ENCODE measurements at regions of chr22 and their contacts with region 1.

Region 1: GRCh38 chr22:42553475-42554361 is at the start of gene SERHL2:
- DNase-seq: peak; percentile 74 to 88 (median 79)
- H3K4me3 ChIP-seq: peak within 1 kb of the TSS; percentile 61 to 66
- H3K4me3 Mint-ChIP-seq: peak within 1 kb of the TSS; percentile 78 to 90 (median 82)
- H3K27ac ChIP-seq: no peak within 1 kb of the TSS
- H3K27ac Mint-ChIP-seq: peak within 1 kb of the TSS in 5 of 7 donors; percentile 41 to 85 (median 80)
- H3K4me1 ChIP-seq: peaks cover 16% of the 10 kb centered on the region
- H3K4me1 Mint-ChIP-seq: peaks cover 9 to 29% (median 11%) of the 10 kb centered on the region in 4 donors
- H3K27me3 ChIP-seq: no peaks in the 10 kb centered on the region
- H3K27me3 Mint-ChIP-seq: no peaks in the 10 kb centered on the region
- total RNA-seq, gene SERHL2: 0.36 to 0.81 TPM

Region 2: DNA sequence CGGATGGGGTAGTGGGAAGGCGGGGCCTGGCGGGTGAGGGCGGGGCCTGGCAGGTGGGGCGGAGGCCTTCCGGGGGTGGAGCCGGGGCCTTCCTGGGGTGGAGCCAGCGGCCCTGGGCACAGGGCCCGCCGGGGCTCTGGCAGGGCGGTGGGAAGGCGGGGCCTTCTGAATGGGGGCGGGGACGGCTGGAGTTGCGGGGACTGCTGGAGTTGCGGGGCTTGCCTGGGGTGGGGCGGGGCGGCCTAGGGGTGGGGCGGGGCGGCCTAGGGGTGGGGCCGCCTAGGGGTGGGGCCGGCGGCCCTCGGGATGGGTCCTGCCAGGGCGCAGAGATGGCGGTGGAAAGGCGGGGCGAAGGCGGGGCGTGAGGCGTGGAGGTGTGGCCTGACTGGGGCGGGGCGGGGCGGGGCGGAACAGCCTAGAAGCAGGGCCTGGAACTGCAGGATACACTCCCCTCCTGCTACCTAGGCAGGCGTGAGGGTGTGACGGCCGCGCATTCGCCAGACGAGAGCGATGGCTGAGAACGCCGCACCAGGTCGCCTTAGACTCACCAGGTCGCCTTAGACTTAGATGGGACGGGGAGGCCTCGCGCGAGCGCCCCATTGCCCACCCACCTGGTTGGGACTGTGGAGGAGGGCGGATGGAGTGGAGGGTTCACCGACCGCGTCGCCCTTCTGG is 53.4 kb before region 1 on chr22:
- CTCF ChIA-PET with region 1: no interaction called
- POLR2A ChIA-PET with region 1: no interaction called
- intact Hi-C with region 1: loop called (anchors 2 kb)
- DNase-seq: peak; percentile 80 to 86 (median 82)
- H3K4me3 ChIP-seq: peak overlapping the region in 1 of 2 donors; percentile 33
- H3K4me3 Mint-ChIP-seq: peak overlapping the region; percentile 61 to 82 (median 72)
- H3K27ac ChIP-seq: no peak overlapping the region
- H3K27ac Mint-ChIP-seq: peak overlapping the region in 4 of 7 donors; percentile 15 to 78 (median 51)
- H3K4me1 ChIP-seq: peaks cover 7% of the 10 kb centered on the region
- H3K4me1 Mint-ChIP-seq: peaks cover 6 to 18% (median 12%) of the 10 kb centered on the region in 4 donors
- H3K27me3 ChIP-seq: no peaks in the 10 kb centered on the region
- H3K27me3 Mint-ChIP-seq: no peaks in the 10 kb centered on the region

Region 3: DNA sequence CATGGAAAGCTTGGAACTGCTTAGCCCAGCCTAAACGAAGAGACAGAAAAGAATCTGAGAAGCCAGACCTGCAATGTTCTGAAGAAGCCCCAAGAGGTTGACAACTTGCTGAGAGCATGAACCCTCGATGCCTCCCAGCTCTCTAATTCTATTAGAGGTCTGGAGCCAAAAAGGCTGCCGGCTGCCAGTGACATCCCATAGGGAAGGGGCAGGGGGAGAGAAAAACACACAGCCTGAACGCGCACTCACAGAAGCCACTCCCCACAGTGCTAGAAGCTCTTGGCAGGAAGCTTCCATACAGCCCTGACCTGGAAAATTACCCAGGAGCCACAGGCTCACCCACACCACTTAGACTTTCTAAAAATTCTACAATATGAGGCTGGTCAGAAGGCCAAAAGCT is 42.6 kb after region 1 on chr22:
- CTCF ChIA-PET with region 1: no interaction called
- POLR2A ChIA-PET with region 1: no interaction called
- intact Hi-C with region 1: no loop called
- DNase-seq: no peak
- H3K4me3 ChIP-seq: no peak overlapping the region
- H3K4me3 Mint-ChIP-seq: no peak overlapping the region
- H3K27ac ChIP-seq: no peak overlapping the region
- H3K27ac Mint-ChIP-seq: peak overlapping the region in 3 of 7 donors; percentile 3 to 85 (median 63)
- H3K4me1 ChIP-seq: no peaks in the 10 kb centered on the region
- H3K4me1 Mint-ChIP-seq: peaks cover 0 to 3% (median 1%) of the 10 kb centered on the region in 4 donors
- H3K27me3 ChIP-seq: no peaks in the 10 kb centered on the region
- H3K27me3 Mint-ChIP-seq: no peaks in the 10 kb centered on the region

Region 4: DNA sequence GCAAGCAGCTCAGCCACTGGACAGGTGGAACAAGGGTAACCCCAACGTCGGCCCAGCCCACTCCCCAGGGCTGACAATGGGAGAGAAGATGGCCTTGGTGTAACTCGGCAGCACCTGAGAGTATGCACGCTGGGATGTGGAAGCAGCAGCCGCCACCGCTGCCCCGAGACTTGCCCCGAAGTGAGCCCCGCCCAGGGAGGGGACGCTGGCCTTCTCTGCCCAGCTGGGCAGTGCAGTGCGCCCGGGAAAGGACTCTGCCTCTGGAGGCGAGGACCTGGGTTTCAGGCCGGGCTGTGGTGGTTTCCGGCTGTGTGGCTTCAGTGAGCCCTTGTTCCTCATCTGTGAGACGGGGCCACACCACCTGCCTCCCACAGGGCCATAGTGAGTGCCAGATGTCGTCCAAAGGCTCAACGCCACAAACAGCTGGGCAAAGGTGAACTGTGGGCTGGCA is 69.6 kb after region 1 on chr22:
- CTCF ChIA-PET with region 1: no interaction called
- POLR2A ChIA-PET with region 1: no interaction called
- intact Hi-C with region 1: no loop called
- DNase-seq: no peak
- H3K4me3 ChIP-seq: no peak overlapping the region
- H3K4me3 Mint-ChIP-seq: no peak overlapping the region
- H3K27ac ChIP-seq: no peak overlapping the region
- H3K27ac Mint-ChIP-seq: no peak overlapping the region
- H3K4me1 ChIP-seq: no peaks in the 10 kb centered on the region
- H3K4me1 Mint-ChIP-seq: peaks cover 4 to 6% (median 6%) of the 10 kb centered on the region in 4 donors
- H3K27me3 ChIP-seq: no peaks in the 10 kb centered on the region
- H3K27me3 Mint-ChIP-seq: no peaks in the 10 kb centered on the region